ENCODE measurements at regions of chr3 and their contacts with region 1.

Region 1: DNA sequence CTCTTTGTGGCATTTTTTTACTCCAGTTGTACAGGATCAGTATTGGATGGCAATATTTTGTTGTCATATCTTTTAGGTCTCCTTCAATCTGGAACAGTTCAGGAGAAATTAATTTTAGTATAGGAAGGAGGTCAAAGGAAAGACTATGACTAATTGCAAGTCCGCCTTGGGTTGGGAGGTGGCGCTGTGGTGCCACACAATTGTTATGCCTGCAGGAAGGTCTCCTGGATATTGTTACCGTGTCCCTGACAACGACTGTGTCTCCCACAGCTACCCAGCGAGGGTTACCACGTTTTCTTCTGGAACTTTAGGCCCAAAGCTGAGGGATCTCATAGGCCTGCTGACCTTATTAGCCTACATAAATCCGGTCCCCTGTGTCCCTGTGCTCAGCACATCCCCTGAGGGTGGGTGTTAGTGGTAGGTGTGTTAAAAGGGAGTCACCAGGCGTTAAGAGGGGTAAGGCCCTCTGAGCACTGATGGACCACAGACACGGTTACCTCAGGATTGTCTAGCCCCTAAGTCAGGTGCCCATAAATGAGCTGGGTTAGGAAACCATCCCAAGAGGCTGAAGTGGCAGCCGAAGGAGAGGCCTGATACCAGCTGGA is 31.5 kb downstream of the KCNAB1 start:
- DNase-seq: peak; percentile 52 to 76 (median 69)
- ATAC-seq: peak; percentile 40 to 87 (median 79)
- H3K4me3 ChIP-seq: no peak overlapping the region
- H3K27ac ChIP-seq: peak overlapping the region in 1 of 12 donors; percentile 73
- H3K4me1 ChIP-seq: peaks cover 0 to 38% (median 17%) of the 10 kb centered on the region in 12 donors
- H3K27me3 ChIP-seq: no peaks in the 10 kb centered on the region
- CTCF ChIP-seq: peak; percentile 53 to 79 (median 74)
- POLR2A ChIP-seq: no peak

Region 2: GRCh38 chr3:156040041-156040440 is 111.9 kb before region 1 on chr3:
- intact Hi-C with region 1: loop called in 2 of 10 experiments (anchors 5 to 10 kb)
- DNase-seq: no peak
- ATAC-seq: no peak
- H3K4me3 ChIP-seq: no peak overlapping the region
- H3K27ac ChIP-seq: no peak overlapping the region
- H3K4me1 ChIP-seq: no peaks in the 10 kb centered on the region
- H3K27me3 ChIP-seq: no peaks in the 10 kb centered on the region
- CTCF ChIP-seq: no peak
- POLR2A ChIP-seq: no peak

Region 3: GRCh38 chr3:156120528-156121251 is 31.2 kb before region 1 on chr3 and contains the start of gene KCNAB1:
- intact Hi-C with region 1: no loop called
- DNase-seq: no peak
- ATAC-seq: no peak
- H3K4me3 ChIP-seq: peak within 1 kb of the TSS in 9 of 12 donors; percentile 20 to 47 (median 34)
- H3K27ac ChIP-seq: no peak within 1 kb of the TSS
- H3K4me1 ChIP-seq: no peaks in the 10 kb centered on the region
- H3K27me3 ChIP-seq: peaks cover 0 to 4% (median 0%) of the 10 kb centered on the region in 9 donors
- CTCF ChIP-seq: no peak
- POLR2A ChIP-seq: no peak
- total RNA-seq, gene KCNAB1: 1.8 to 3.5 (median 2.6) TPM

Region 4: GRCh38 chr3:156449712-156450574 is 298.0 kb after region 1 on chr3:
- intact Hi-C with region 1: loop called in 7 of 10 experiments (anchors 2 to 10 kb)
- DNase-seq: no peak
- ATAC-seq: peak in 3 of 4 donors; percentile 50 to 80 (median 78)
- H3K4me3 ChIP-seq: no peak overlapping the region
- H3K27ac ChIP-seq: no peak overlapping the region
- H3K4me1 ChIP-seq: no peaks in the 10 kb centered on the region
- H3K27me3 ChIP-seq: no peaks in the 10 kb centered on the region
- CTCF ChIP-seq: peak; percentile 25 to 64 (median 54)
- POLR2A ChIP-seq: no peak

Region 5: DNA sequence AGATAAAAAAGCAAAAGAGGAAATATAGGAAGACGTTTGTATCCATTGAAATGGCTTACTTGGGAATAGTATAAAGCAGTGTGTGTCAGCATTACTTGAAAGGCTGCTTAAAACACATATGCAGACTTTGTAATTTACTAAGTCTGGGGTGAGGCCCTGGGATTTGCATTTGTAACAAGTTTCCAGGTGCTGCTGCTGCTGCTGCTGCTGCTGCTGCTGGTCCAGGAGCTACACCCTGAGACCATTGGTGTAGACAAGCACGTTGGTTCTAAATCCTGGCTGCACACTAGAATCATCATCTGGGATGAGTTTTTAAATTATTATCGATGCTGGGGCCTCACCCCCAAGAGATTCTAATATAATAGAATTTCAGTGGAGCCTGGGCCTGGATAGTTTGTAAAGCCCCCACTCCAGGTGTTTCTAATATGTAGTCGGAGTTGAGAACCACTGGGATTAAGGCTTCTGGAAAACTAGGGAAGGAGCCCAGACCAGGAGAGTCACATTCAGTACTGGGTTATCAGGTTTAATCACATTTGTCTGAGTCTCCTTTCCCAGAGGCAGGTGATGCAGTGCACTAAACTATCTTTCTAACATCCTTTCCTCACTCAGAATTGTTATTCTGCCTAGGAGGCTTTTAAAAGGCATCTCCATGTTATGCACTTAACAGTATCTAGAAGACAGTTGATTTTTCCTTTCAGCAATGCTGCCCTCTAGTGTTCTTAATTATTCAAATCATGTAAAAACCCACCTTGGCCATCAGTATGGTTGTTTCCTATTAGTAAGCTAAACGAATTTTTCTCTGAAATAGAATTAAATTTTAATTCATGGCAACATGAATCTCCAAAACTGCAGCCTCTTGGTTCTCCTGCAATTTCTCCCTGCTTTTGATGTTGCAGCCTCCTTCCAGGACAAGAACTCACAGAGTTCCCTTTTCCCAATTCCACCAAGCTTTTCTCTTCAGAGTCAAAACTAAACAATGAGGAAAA is 357.6 kb after region 1 on chr3:
- intact Hi-C with region 1: loop called (anchors 1 to 5 kb)
- DNase-seq: no peak
- ATAC-seq: peak in 3 of 4 donors; percentile 56 to 75 (median 66)
- H3K4me3 ChIP-seq: no peak overlapping the region
- H3K27ac ChIP-seq: no peak overlapping the region
- H3K4me1 ChIP-seq: no peaks in the 10 kb centered on the region
- H3K27me3 ChIP-seq: no peaks in the 10 kb centered on the region
- CTCF ChIP-seq: peak; percentile 61 to 78 (median 68)
- POLR2A ChIP-seq: no peak

Region 6: DNA sequence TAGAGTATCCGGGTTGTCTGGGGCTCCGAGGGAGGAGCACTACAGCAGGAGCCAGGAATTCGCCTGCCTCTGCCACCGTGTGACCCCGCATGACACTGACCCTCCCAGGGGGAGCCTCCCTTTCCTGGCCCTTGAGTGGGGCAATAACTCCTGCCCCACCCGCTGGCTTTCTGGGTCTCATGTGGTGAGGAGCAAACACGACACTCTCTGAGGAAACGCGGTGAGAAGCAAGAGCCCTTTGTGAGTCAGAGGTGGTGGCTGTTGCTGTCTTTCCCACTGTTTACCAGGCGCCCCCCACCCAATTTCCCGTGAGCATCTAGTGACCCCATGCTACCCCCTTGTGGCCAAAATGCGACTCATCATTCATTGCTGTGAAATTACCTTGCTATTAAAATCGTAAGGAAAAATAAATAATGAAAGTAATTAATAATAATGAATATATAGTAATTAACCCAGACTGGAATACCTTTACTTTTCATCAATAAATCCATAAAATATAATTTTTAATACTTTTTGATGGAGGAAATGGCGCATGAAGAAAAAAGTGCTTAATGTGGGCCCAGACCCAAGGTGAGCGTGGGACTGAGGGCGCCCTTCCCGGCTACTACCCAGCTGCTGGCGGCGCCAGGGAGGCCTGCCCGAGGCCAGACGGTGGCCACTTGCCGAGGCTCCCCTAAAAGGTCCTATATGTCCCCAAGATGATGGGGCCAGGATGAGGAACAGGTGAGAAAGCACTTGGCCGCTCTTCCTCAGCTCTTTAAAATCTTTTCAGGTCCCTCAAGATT is 978.7 kb after region 1 on chr3:
- intact Hi-C with region 1: loop called in 5 of 10 experiments (anchors 5 kb)
- DNase-seq: peak in 4 of 5 donors; percentile 46 to 66 (median 55)
- ATAC-seq: peak; percentile 3 to 65 (median 18)
- H3K4me3 ChIP-seq: peak overlapping the region in 10 of 12 donors; percentile 12 to 43 (median 32)
- H3K27ac ChIP-seq: peak overlapping the region; percentile 68 to 88 (median 80)
- H3K4me1 ChIP-seq: peaks cover 5 to 77% (median 52%) of the 10 kb centered on the region in 12 donors
- H3K27me3 ChIP-seq: no peaks in the 10 kb centered on the region
- CTCF ChIP-seq: peak; percentile 47 to 77 (median 70)
- POLR2A ChIP-seq: no peak